WTC11 (cell line): ENCODE measurements at regions of chr1 and their contacts with region 1.

Region 1: DNA sequence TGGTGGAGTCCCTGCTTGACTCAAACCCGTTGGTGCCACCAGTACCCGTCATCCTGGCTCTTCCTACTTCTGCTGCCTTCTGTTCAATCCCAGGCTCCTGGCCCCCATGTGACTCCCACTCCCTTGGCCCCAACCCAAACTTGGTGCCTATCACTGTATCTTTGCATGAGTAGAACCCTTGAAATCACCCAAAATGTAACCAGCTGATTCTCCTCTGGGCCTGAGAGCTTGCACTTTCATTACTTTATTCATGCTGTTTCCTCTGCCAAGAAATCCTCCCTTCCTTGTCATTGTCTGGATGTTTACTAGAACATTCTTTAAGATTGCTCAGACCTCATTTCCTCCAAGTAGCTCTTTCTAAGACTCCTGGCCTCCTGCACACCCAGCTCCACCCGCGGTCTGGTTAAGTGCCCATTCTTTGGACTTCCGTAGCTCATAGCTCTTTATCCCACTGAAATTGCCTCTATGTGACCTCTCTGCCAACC is 15.7 kb downstream of the PTAFR start:
- DNase-seq: no peak
- ATAC-seq: no peak
- H3K4me3 Mint-ChIP-seq: no peak overlapping the region
- H3K27ac Mint-ChIP-seq: no peak overlapping the region
- H3K4me1 Mint-ChIP-seq: peaks cover 8% of the 10 kb centered on the region
- H3K27me3 Mint-ChIP-seq: no peaks in the 10 kb centered on the region
- CTCF ChIP-seq: no peak

Region 2: GRCh38 chr1:28078680-28079626 is 81.9 kb before region 1 on chr1:
- CTCF ChIA-PET with region 1: no interaction called
- POLR2A ChIA-PET with region 1: no interaction called
- DNase-seq: no peak
- ATAC-seq: no peak
- H3K4me3 Mint-ChIP-seq: no peak overlapping the region
- H3K27ac Mint-ChIP-seq: no peak overlapping the region
- H3K4me1 Mint-ChIP-seq: no peaks in the 10 kb centered on the region
- H3K27me3 Mint-ChIP-seq: no peaks in the 10 kb centered on the region
- CTCF ChIP-seq: no peak

Region 3: GRCh38 chr1:28099050-28099769 is 61.6 kb before region 1 on chr1:
- CTCF ChIA-PET with region 1: no interaction called
- POLR2A ChIA-PET with region 1: no interaction called
- DNase-seq: no peak
- ATAC-seq: no peak
- H3K4me3 Mint-ChIP-seq: no peak overlapping the region
- H3K27ac Mint-ChIP-seq: no peak overlapping the region
- H3K4me1 Mint-ChIP-seq: no peaks in the 10 kb centered on the region
- H3K27me3 Mint-ChIP-seq: no peaks in the 10 kb centered on the region
- CTCF ChIP-seq: no peak

Region 4: DNA sequence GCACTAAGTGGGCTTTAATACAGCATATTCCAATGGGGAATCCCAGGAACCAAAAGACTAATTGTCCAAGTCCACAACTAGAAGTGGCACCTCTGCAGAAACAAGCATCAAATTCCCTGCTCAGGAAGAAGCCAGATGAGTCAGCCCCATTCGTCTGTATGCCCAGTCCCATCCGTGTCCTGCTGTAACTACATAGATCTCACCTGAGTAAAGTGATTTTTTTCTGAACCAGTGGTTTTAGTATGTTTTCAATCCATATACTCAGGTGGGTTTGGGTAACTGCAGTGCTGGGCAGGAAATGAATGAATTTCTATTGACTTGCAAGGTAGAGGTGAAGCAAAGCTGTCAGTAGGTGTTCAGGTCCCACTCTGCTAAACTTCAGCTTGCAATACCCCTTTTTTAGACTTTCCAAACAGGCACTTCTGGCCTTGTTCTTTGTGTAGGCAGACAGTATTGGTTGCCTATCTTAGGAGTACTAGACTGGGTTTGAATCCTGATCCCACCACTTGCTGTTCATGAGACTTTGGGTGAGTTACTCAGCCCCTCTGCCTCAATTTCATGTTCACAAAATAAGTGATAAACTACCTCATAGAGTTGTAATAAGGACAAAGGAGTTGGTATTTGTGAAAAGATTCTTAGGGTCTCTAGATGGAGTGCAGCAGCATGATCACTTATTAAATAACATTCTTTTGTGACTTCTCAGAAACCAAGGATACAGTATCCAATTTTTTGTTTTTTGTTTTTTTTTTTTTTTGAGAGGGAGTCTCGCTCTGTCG is 350.0 kb after region 1 on chr1:
- CTCF ChIA-PET with region 1: no interaction called
- POLR2A ChIA-PET with region 1: interaction called, 11 read pairs
- DNase-seq: no peak
- ATAC-seq: peak; percentile 2
- H3K4me3 Mint-ChIP-seq: peak overlapping the region; percentile 99
- H3K27ac Mint-ChIP-seq: peak overlapping the region; percentile 99
- H3K4me1 Mint-ChIP-seq: peaks cover 40% of the 10 kb centered on the region
- H3K27me3 Mint-ChIP-seq: peaks cover 6% of the 10 kb centered on the region
- CTCF ChIP-seq: no peak